Posterior vena cava (tissue), 2 donors: ENCODE measurements at regions of chr11 and their contacts with region 1.

Region 1: DNA sequence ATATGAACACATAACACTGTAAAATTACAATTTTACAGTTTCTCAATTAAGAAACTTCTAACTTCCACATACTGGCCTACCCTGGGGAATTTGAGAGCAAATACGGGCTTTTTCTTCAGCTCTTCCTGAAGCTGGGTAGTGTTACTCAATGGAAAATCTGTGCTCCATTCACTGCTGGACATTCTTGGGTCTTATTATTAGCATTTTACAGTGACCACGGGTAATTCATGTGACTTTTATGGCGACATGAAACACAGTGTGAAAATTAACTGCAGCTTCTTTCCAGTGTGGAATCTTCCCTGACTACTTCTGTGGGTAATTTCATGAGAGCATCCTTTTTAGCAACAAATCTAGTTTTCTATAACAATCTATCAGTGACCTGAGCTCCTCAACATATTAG is 423.7 kb upstream of the ANO5 start:
- DNase-seq: no peak

Region 2: GRCh38 chr11:20668844-20669819 is 1100.1 kb before region 1 on chr11 and contains the start of gene NELL1:
- intact Hi-C with region 1: loop called in 1 of 2 experiments (anchors 5 kb)
- DNase-seq: no peak
- total RNA-seq, gene NELL1: not detected

Region 3: GRCh38 chr11:22554221-22554620 is 785.0 kb after region 1 on chr11:
- intact Hi-C with region 1: no loop called
- DNase-seq: no peak